Psoas muscle (tissue), 8 donors: ENCODE measurements at regions of chr2 and their contacts with region 1.

Region 1: GRCh38 chr2:152861349-152861942 is 143.0 kb downstream of the ARL6IP6 start:
- DNase-seq: no peak
- ATAC-seq: no peak
- H3K4me3 ChIP-seq: no peak overlapping the region
- H3K27ac ChIP-seq: no peak overlapping the region
- H3K4me1 ChIP-seq: no peaks in the 10 kb centered on the region
- H3K27me3 ChIP-seq: no peaks in the 10 kb centered on the region
- CTCF ChIP-seq: peak; percentile 62

Region 2: DNA sequence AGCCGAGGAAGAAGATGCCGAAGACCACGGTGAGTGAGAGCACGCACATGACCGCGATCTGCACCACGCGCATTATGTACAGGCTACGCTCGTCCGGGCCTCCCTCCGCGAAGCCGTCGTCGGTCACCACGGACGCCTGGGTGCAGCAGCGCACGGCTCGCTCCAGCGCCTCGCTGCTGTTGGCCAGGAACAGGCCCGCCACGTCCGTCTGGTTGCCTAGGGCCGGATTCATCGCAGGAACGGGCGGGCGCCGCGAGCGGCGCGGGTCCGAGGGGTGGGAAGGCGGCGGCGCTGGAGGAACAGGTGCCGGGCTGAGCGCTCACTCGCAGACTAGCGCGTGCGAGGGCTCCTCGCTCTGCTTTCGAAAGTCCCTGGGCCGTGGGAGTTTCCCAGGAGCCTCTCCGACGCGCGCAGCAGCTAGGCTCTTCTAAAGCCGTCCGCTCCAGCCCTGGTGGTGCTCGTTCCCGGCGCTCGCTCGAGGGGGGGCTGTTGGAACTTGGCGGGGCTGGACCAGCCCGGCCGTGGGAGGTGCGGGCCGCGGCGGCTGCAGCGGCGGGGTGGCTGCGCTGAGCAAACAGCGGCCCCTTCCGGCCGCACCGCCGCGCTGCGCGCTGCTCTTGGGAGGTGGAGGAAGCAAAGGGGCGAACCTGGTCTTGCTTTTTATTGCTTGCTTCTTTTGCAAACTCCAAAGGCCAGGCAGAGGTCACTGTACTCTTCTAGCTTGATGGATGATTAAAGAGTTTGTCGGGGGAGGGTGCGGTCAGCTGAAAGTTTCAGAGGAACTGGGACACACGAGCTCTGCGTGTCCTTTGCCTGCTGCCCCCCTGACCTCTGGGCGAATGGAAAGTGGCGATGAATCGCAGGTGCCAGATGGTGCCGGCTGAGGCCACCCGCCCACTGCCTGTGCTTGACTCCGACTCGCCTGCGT is 617.2 kb after region 1 on chr2 and contains the start of gene RPRM:
- intact Hi-C with region 1: loop called in 1 of 2 experiments (anchors 5 kb)
- DNase-seq: peak; percentile 78 to 81
- ATAC-seq: peak; percentile 82 to 95 (median 92)
- H3K4me3 ChIP-seq: peak within 1 kb of the TSS; percentile 66
- H3K27ac ChIP-seq: no peak within 1 kb of the TSS
- H3K4me1 ChIP-seq: peaks cover 6% of the 10 kb centered on the region
- H3K27me3 ChIP-seq: peaks cover 3 to 65% (median 17%) of the 10 kb centered on the region in 3 donors
- CTCF ChIP-seq: peak; percentile 82
- total RNA-seq, gene RPRM: not detected

Region 3: GRCh38 chr2:153519257-153519875 is 657.9 kb after region 1 on chr2:
- intact Hi-C with region 1: loop called in 1 of 2 experiments (anchors 5 kb)
- DNase-seq: peak; percentile 36 to 61
- ATAC-seq: peak in 1 of 4 donors; percentile 42
- H3K4me3 ChIP-seq: no peak overlapping the region
- H3K27ac ChIP-seq: no peak overlapping the region
- H3K4me1 ChIP-seq: no peaks in the 10 kb centered on the region
- H3K27me3 ChIP-seq: peaks cover 0 to 5% (median 0%) of the 10 kb centered on the region in 3 donors
- CTCF ChIP-seq: peak; percentile 82